ENCODE measurements at regions of chr3 and their contacts with region 1.

Region 1: DNA sequence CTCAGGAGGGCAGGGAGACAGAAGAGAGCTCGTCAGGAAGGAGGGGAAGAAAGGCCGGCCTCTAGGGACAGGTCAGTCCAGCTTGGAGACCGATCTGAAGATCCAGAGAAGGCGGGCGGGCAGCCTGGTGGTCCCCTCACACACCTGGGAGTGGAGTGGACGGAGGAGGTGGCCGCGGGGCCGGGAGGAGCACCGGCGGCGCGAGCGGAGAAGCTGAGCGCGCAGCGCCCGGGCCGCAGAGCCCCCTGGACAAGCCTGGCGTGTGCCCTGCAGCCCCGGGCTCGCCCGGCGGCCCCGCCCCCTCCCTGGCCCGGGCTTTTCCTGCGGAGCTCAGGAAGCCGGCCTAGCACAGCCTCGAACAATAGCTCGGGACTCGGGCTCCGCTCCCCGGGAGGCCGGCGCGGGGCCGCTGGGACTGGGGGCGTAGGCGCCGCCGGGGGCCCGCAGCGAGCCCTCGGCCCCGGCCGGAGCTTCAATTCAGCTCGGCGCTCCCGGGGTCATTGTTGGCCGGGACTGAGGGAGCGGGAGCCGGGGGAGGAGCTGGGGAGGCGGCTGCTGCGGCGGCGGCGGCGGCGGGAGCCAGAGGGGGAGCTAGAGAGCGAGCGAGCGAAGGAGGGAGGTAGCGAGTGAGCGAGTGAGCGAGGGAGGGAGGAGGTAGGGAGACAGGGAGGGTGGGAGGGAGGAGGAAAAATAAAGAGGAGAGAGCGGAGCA is 40.9 kb upstream of the ROPN1 start:
- DNase-seq: peak; percentile 89
- ATAC-seq: peak; percentile 96

Region 2: DNA sequence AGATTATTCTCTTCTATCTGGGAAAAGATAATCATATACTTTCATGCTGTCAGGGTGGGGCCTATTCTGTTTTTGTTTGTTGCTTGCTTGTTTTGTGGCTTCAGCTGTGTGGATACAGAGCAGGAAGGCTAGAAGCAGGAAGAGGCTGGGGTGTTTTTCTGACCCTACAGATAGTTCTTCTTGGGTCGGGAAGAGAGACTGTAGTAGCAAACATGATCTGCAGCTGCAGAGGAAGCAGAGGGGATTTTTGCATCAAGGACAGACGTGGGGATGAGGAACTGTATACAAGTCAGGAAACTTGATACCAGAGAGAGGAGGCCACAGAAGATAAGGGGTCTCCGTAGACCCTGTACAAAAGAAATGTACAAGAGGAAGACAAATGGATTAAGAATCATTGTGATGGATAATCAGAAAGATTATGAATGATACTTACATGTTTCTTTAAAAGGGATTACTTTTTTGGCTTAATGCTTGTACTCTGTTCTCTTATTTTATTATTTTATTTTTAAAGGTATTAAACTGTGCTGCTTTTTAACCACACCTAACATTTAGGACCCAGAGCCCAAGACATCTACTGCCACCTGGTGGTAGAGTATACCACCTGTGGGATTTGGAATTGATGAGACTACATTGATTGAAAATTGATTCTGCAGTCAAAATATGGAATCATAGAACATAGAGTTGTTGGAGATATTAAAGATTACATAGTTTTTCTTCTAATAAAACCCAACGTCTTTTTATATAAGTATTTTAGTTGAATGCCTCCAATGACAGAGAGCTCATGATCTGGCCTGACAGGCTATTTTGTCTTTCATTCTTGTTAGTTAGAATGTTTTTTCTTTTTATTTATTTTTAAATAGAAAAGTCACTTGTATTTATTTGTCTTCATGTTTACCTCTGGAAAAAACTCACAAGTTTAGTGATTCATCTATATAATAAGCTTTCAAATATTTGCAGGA is 46.4 kb after region 1 on chr3:
- intact Hi-C with region 1: loop called (anchors 5 kb)
- DNase-seq: no peak
- ATAC-seq: no peak

Region 3: GRCh38 chr3:124174476-124174875 is 141.7 kb after region 1 on chr3:
- intact Hi-C with region 1: no loop called
- DNase-seq: no peak
- ATAC-seq: peak; percentile 46

Measured in Right ventricle myocardium inferior (tissue), 1 donor.